ENCODE measurements at regions of chr20 and their contacts with region 1.

Region 1: GRCh38 chr20:24079661-24080412 is 91.3 kb upstream of the GGTLC1 start:
- DNase-seq: no peak
- ATAC-seq: no peak
- H3K4me3 ChIP-seq: no peak overlapping the region
- H3K27ac ChIP-seq: no peak overlapping the region
- H3K4me1 ChIP-seq: no peaks in the 10 kb centered on the region
- H3K27me3 ChIP-seq: peaks cover 0 to 29% (median 0%) of the 10 kb centered on the region in 7 donors
- CTCF ChIP-seq: no peak

Region 2: GRCh38 chr20:24134284-24134683 is 54.4 kb after region 1 on chr20:
- intact Hi-C with region 1: loop called in 1 of 10 experiments (anchors 10 kb)
- DNase-seq: no peak
- ATAC-seq: no peak
- H3K4me3 ChIP-seq: no peak overlapping the region
- H3K27ac ChIP-seq: no peak overlapping the region
- H3K4me1 ChIP-seq: no peaks in the 10 kb centered on the region
- H3K27me3 ChIP-seq: peaks cover 0 to 3% (median 0%) of the 10 kb centered on the region in 7 donors
- CTCF ChIP-seq: no peak

Region 3: DNA sequence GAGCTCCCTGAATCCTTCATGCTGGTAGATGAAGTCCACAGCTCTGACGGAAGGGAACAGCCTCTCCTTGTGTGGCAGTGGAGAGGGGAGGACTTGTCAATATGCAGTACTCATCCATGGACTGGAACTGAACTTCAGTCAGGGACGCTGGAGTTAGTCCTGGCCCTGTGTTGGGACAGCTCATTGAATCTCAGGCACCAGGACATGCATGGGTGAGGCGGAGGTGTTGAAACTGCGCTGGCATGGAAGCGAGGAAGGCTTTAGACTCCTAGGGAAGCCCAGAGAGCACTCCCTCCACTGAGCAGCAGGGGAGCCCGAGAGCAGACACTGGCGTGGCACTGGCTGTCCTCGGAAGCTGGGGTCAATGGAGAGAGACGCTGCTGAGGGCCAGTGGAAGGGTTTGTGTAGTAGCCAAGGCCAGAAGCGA is 70.1 kb after region 1 on chr20:
- intact Hi-C with region 1: loop called in 1 of 10 experiments (anchors 10 kb)
- DNase-seq: peak; percentile 12 to 48
- ATAC-seq: peak; percentile 50 to 92 (median 72)
- H3K4me3 ChIP-seq: no peak overlapping the region
- H3K27ac ChIP-seq: no peak overlapping the region
- H3K4me1 ChIP-seq: peaks cover 0 to 7% (median 0%) of the 10 kb centered on the region in 9 donors
- H3K27me3 ChIP-seq: no peaks in the 10 kb centered on the region
- CTCF ChIP-seq: peak in 8 of 9 donors; percentile 19 to 53 (median 48)

Region 4: DNA sequence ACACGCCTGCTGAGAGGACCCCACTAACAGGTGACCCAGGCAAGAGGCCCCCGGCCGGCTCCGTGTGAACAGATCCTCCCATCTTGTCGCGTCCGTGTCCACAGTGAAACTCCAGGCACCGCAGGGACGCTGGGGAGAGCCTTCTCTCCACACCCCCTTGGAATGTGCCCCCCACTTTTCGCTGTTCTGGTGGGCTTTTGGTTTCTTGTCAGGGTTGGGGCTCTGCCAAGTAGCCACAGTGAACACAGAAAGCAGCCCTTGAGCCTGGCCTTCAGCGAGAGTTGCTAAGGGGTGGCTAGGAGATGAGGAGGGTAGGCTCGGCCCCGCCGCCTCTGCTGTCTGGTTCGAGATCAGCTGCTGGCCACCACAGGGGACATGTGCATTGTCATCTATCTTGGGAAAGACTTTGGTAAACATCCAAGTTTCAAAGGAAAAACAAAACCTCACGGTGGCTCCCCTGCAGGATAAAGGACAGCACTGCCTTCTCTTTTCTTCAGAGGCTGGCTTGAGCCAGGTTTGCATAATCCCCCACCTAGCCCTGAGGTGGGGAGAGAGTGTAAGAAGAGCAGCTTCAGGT is 412.3 kb after region 1 on chr20:
- intact Hi-C with region 1: no loop called
- DNase-seq: no peak
- ATAC-seq: peak in 7 of 8 donors; percentile 16 to 58 (median 46)
- H3K4me3 ChIP-seq: no peak overlapping the region
- H3K27ac ChIP-seq: peak overlapping the region in 1 of 10 donors; percentile 34
- H3K4me1 ChIP-seq: peaks cover 0 to 38% (median 9%) of the 10 kb centered on the region in 9 donors
- H3K27me3 ChIP-seq: no peaks in the 10 kb centered on the region
- CTCF ChIP-seq: peak in 4 of 9 donors; percentile 14 to 26 (median 22)

Measured in heart right ventricle (tissue), 16 donors.